ENCODE measurements at regions of chrX and their contacts with region 1.

Region 1: DNA sequence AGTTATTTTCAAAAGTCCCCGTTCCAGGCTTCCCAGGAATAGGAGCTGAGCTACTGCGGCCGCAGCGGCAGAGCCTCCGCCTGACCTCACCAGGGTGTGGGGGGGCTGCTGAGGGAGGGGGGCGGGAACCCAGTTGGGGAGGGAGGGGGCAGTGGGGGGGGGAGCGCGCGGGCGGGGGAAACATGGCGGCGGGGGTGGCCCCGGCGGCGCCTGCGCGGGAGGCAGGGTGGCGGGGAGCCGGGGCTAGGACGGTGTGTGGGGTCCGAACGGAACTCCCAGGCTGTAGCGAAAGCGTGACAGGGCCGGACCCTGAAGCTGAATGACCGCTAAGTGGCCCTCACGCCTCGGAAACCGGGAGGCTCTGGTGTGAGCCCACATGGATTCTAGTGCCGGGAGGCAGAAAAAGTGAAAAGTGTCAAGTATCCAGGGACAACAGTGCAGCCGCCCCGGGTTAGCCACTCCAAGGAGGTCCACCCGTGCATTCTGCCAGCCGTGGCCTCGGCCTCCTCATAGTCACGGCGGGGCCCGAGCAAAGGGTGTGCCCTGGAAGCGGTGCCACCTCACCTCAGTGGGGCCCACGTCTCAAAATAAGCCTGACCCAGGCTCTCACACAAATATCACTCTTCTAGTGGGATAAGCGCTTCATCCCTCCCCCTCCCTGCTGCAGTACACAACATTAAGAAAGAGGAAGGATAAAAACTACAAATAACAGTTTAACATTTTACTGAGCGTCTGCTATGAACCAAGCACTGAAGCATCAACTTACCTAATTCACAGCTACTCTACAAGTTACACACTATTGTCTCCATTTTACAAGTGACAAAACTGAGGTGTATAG is at the start of gene KLHL13:
- DNase-seq: peak; percentile 33
- ATAC-seq: peak; percentile 66
- H3K4me3 ChIP-seq: peak within 1 kb of the TSS; percentile 86
- H3K27ac ChIP-seq: 0 out of 2 replicates have a peak within 1 kb of the TSS, but pooled peaks have one; percentile 11
- H3K4me1 ChIP-seq: peaks cover 16% of the 10 kb centered on the region
- H3K27me3 ChIP-seq: no peaks in the 10 kb centered on the region
- CTCF ChIP-seq: no peak
- total RNA-seq, gene KLHL13: 3.5 and 4.0 TPM in 2 replicates

Region 2: GRCh38 chrX:117996918-117997480 is 119.9 kb before region 1 on chrX:
- CTCF ChIA-PET with region 1: no interaction called
- POLR2A ChIA-PET with region 1: interaction called, 3 read pairs
- intact Hi-C with region 1: loop called (anchors 1 kb)
- DNase-seq: peak; percentile 65
- ATAC-seq: peak; percentile 72
- H3K4me3 ChIP-seq: no peak overlapping the region
- H3K27ac ChIP-seq: no peak overlapping the region
- H3K4me1 ChIP-seq: peaks cover 4% of the 10 kb centered on the region
- H3K27me3 ChIP-seq: no peaks in the 10 kb centered on the region
- CTCF ChIP-seq: peak; percentile 80

Region 3: GRCh38 chrX:118212817-118213183 is 95.9 kb after region 1 on chrX:
- CTCF ChIA-PET with region 1: no interaction called
- POLR2A ChIA-PET with region 1: interaction called, 10 read pairs
- intact Hi-C with region 1: no loop called
- DNase-seq: no peak
- ATAC-seq: no peak
- H3K4me3 ChIP-seq: no peak overlapping the region
- H3K27ac ChIP-seq: no peak overlapping the region
- H3K4me1 ChIP-seq: peaks cover 17% of the 10 kb centered on the region
- H3K27me3 ChIP-seq: no peaks in the 10 kb centered on the region
- CTCF ChIP-seq: no peak

Region 4: GRCh38 chrX:118226090-118226428 is 109.1 kb after region 1 on chrX:
- CTCF ChIA-PET with region 1: no interaction called
- POLR2A ChIA-PET with region 1: no interaction called
- intact Hi-C with region 1: loop called (anchors 2 kb)
- DNase-seq: peak; percentile 45
- ATAC-seq: peak; percentile 74
- H3K4me3 ChIP-seq: peak overlapping the region; percentile 36; the same call in 1 of the 2 replicates
- H3K27ac ChIP-seq: peak overlapping the region; percentile 82
- H3K4me1 ChIP-seq: peaks cover 13% of the 10 kb centered on the region; the same call in 1 of the 2 replicates
- H3K27me3 ChIP-seq: no peaks in the 10 kb centered on the region
- CTCF ChIP-seq: peak; percentile 74